ENCODE measurements at regions of chr10 and their contacts with region 1.

Region 1: DNA sequence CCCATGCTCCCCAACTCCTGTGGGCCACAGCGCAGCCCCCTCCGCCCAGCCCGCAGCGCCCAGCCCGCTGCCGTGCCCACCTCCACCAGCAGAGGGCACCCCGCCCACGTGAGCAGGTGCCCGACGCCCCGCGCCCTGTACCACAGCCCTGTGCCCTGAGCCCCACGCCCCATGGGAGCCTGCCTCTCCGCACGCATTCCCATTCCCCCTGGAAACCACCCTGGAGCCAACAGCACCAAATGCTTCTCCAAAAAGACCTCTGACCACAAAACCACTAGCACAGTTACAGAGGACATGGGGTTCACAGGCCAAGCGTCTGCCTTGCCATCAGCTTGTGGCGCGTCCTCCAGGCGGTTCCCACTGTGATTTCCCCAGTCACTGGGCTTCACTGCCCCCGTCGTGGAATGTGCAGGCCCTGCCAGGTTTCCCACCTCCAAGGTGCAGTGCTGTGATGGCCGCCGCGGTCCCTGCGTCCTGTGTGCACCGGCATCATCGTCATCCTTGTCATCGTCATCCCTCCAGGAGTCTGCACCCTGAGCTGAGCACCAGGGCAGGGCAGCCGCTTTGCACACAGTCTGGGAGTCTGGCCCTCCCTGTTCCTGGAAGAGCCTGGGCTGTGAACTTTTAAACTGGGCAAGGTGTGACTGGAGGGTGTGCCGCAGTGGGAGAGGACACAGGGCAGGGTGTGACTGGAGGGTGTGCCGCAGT is 61.7 kb downstream of the PWWP2B start:
- DNase-seq: no peak
- ATAC-seq: peak; percentile 72
- H3K4me3 ChIP-seq: no peak overlapping the region
- H3K27ac ChIP-seq: no peak overlapping the region; the same call in 1 of the 2 replicates
- H3K4me1 ChIP-seq: peaks cover 16% of the 10 kb centered on the region
- H3K27me3 ChIP-seq: no peaks in the 10 kb centered on the region
- CTCF ChIP-seq: peak; percentile 100

Region 2: GRCh38 chr10:132248455-132249225 is 210.1 kb before region 1 on chr10:
- CTCF ChIA-PET with region 1: no interaction called
- POLR2A ChIA-PET with region 1: no interaction called
- in situ Hi-C with region 1: no loop called
- intact Hi-C with region 1: no loop called
- DNase-seq: no peak
- ATAC-seq: peak; percentile 78
- H3K4me3 ChIP-seq: peak overlapping the region; percentile 33 to 66
- H3K27ac ChIP-seq: 0 out of 2 replicates have a peak overlapping the region, but pooled peaks have one; percentile 10
- H3K4me1 ChIP-seq: peaks cover 5% of the 10 kb centered on the region; the same call in 1 of the 2 replicates
- H3K27me3 ChIP-seq: no peaks in the 10 kb centered on the region
- CTCF ChIP-seq: no peak

Region 3: DNA sequence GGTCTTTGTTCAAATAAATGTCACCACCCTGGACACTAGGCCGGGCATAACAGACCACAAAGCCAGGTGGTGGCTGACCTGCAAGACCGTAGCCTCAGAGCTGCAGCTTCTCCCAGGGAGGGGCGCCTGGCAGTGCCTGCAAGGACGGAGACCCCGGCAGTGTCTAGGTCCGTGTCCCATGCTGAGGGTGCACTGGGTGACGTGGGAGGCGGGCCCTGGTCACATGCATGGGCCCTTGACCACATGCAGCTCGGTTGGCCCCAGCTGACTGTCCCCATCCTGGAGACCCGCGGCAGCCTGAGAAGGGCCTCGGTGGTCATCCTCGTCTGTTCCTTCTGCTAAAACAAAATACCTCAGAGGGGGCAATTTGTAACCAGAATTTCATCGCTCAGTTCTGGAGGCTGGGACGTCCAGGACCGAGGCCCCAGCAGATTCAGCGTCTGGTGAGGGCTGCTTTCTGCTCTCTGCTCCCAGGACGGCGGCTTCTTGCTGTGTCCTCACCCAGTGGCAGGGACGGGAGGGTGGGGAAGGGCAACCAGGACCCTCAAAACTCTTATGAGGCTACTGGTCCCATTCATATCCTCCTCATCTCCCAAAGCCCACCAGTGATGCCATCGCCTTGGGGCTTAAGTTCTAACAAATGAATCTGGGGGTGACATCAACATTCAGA is 24.9 kb before region 1 on chr10:
- CTCF ChIA-PET with region 1: no interaction called
- POLR2A ChIA-PET with region 1: interaction called, 30 read pairs
- in situ Hi-C with region 1: no loop called
- intact Hi-C with region 1: no loop called
- DNase-seq: no peak
- ATAC-seq: no peak
- H3K4me3 ChIP-seq: no peak overlapping the region
- H3K27ac ChIP-seq: peak overlapping the region; percentile 77
- H3K4me1 ChIP-seq: peaks cover 26% of the 10 kb centered on the region
- H3K27me3 ChIP-seq: no peaks in the 10 kb centered on the region
- CTCF ChIP-seq: no peak

Region 4: DNA sequence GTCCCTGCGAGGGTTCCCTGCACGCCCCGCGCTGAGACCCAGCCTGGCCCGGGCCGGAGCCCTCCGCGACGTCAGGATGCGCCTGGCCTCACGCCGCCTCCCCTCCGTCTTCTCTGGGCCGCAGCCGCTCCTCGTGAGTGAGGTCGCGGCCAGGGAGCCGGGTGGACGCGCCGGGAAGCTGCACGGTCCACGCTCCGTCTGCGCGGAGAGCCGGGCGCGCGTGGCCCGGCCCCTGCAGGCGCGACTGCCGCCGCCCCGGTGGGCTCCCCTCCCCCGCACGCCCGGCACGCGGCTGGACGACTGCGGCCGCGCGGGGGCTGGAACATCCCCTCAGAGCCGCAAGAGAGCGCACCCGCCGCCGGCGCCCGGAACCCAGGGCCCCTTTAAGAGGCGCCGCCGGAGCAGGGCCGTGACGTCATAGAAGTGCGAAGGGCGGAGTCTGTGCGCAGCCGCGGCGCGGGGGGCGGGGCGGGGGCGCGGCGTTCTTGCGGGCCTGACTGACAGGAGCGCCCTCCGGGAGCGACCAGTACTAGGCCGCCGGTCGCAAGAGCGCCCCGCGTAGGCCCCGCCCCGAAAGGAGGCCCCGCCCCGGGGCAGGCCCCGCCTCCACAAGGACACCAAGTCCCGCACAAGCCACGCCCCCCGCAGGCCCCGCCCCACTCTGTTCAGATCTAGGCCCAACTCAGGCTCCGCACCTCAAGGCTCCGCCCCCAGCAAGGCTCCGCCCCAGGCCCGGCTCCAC is 78.4 kb after region 1 on chr10:
- CTCF ChIA-PET with region 1: interaction called, 6 read pairs
- POLR2A ChIA-PET with region 1: no interaction called
- in situ Hi-C with region 1: no loop called
- intact Hi-C with region 1: loop called (anchors 2 kb)
- DNase-seq: peak; percentile 82
- ATAC-seq: peak; percentile 87
- H3K4me3 ChIP-seq: peak overlapping the region; percentile 66 to 73
- H3K27ac ChIP-seq: peak overlapping the region; percentile 83
- H3K4me1 ChIP-seq: peaks cover 75% of the 10 kb centered on the region
- H3K27me3 ChIP-seq: no peaks in the 10 kb centered on the region
- CTCF ChIP-seq: peak; percentile 70; the same call in 1 of the 2 replicates

Region 5: DNA sequence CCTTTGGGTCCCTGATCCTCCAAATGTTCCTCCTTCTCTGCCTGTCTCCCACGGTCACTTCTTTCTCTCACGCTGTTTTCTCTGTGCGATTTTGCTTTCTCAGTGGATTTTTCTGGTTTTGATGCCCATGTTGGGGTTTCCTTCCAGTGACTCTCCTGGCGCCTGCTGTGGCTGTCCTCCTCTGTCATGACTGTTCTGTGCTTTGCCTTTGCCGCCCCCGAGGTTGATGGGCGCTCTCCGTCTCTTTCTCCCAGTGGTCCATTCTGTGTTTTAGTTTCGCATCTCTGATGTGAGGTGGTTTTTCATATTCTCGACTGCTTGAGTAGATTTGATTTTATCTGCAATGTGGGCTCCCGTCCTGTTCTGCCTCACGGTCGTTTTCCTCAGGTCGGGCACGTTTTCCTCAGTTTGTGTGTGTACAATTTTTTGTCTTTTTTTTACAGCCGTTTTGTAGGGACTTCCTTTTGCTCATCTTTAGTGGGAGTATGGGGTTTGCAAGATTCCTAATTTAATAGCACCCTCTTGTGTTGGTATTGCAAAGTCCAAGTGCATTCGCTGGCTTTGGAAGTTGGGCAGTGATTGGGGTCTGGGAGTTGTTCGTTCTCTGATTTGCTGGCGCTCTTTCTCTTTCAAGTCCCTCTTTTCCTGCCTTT is 178.9 kb after region 1 on chr10:
- CTCF ChIA-PET with region 1: no interaction called
- POLR2A ChIA-PET with region 1: no interaction called
- in situ Hi-C with region 1: no loop called
- intact Hi-C with region 1: loop called (anchors 1 kb)
- DNase-seq: peak; percentile 56
- ATAC-seq: peak; percentile 90
- H3K4me3 ChIP-seq: peak overlapping the region in 1 of 2 experiments; percentile 2; a peak in 1 of 4 replicates
- H3K27ac ChIP-seq: no peak overlapping the region
- H3K4me1 ChIP-seq: peaks cover 10% of the 10 kb centered on the region
- H3K27me3 ChIP-seq: no peaks in the 10 kb centered on the region
- CTCF ChIP-seq: peak; percentile 87